ENCODE measurements at regions of chr10 and their contacts with region 1.

Region 1: GRCh38 chr10:100878291-100878910 is 34.4 kb upstream of the SLF2 start:
- DNase-seq: peak; percentile 78
- H3K4me3 Mint-ChIP-seq: no peak overlapping the region
- H3K27ac Mint-ChIP-seq: no peak overlapping the region
- H3K4me1 Mint-ChIP-seq: peaks cover 7% of the 10 kb centered on the region
- H3K27me3 Mint-ChIP-seq: no peaks in the 10 kb centered on the region
- CTCF ChIP-seq: peak; percentile 73

Region 2: GRCh38 chr10:100438674-100439315 is 439.6 kb before region 1 on chr10:
- CTCF ChIA-PET with region 1: interaction called, 40 read pairs
- POLR2A ChIA-PET with region 1: no interaction called
- intact Hi-C with region 1: loop called (anchors 1 kb)
- DNase-seq: no peak
- H3K4me3 Mint-ChIP-seq: no peak overlapping the region
- H3K27ac Mint-ChIP-seq: no peak overlapping the region
- H3K4me1 Mint-ChIP-seq: peaks cover 4% of the 10 kb centered on the region
- H3K27me3 Mint-ChIP-seq: no peaks in the 10 kb centered on the region
- CTCF ChIP-seq: no peak

Region 3: GRCh38 chr10:100535715-100536353 is 342.6 kb before region 1 on chr10 and contains the start of gene HIF1AN:
- CTCF ChIA-PET with region 1: interaction called, 19 read pairs
- POLR2A ChIA-PET with region 1: interaction called, 8 read pairs
- intact Hi-C with region 1: loop called (anchors 10 kb)
- DNase-seq: peak; percentile 94
- H3K4me3 Mint-ChIP-seq: no peak within 1 kb of the TSS
- H3K27ac Mint-ChIP-seq: no peak within 1 kb of the TSS
- H3K4me1 Mint-ChIP-seq: peaks cover 7% of the 10 kb centered on the region
- H3K27me3 Mint-ChIP-seq: no peaks in the 10 kb centered on the region
- CTCF ChIP-seq: peak; percentile 87
- total RNA-seq, gene HIF1AN: 40.1 and 41.0 TPM in 2 replicates

Region 4: DNA sequence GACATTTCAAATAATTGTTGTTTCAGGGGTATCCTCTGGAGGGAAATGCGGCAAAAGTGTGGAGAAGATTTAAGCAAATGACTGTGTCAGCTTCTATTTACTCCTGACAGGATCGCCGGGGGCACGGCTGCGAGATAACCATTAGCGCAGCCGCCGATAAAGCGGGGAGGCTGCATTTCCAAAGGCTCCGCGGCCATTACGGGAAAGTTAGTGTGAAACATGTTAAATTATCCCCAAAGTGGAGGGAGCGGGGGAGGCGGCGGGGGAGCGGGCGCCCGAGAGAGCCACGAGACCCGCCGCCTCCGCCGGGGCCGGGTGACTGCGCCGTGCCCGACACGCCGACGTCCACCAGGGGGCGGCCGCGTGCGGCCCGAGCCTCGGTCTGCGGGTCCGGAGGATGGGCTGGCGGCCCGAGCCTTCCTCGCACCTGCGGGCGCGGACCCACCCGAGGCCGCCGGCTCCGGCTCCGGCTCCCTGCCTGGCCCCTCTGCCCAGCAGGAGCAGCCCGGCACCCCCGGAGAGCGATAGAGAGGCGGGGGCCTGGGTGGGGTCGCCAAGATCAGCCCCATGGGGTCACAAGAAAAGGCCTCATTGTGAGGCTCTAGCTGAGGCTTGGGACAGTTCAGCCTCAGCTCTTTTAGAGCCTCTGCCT is 207.4 kb before region 1 on chr10:
- CTCF ChIA-PET with region 1: interaction called, 6 read pairs
- POLR2A ChIA-PET with region 1: no interaction called
- intact Hi-C with region 1: loop called (anchors 1 kb)
- DNase-seq: peak; percentile 16
- H3K4me3 Mint-ChIP-seq: no peak overlapping the region
- H3K27ac Mint-ChIP-seq: no peak overlapping the region
- H3K4me1 Mint-ChIP-seq: no peaks in the 10 kb centered on the region
- H3K27me3 Mint-ChIP-seq: peaks cover 62% of the 10 kb centered on the region
- CTCF ChIP-seq: peak; percentile 80

Region 5: DNA sequence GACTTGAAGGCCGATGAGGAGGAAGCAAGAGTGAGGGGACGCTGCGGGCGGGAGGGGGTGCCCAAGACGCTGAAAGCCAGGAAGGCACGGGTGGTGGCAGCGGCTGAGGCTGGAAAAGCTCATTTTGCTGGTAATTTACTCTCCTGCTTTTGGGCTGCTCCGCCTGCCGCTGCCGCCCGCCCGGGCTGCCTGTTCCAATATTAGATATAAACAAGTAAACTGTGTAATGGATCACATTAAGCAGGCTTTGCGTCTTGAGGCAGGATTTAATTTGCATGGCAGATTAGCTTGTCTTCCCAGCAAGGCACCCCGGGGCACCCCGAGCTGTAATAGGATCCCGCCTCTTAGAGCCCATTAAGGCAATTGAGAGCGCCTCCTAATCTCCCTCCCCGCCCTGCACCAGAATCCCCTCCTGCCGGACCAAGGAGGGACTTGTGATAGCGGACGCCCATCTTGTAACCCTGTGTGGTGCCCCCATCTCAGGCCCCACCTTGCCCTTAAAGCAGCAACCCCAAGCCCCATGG is 11.8 kb before region 1 on chr10:
- CTCF ChIA-PET with region 1: interaction called, 10 read pairs
- POLR2A ChIA-PET with region 1: no interaction called
- intact Hi-C with region 1: no loop called
- DNase-seq: no peak
- H3K4me3 Mint-ChIP-seq: no peak overlapping the region
- H3K27ac Mint-ChIP-seq: no peak overlapping the region
- H3K4me1 Mint-ChIP-seq: no peaks in the 10 kb centered on the region
- H3K27me3 Mint-ChIP-seq: peaks cover 39% of the 10 kb centered on the region
- CTCF ChIP-seq: no peak

Region 6: DNA sequence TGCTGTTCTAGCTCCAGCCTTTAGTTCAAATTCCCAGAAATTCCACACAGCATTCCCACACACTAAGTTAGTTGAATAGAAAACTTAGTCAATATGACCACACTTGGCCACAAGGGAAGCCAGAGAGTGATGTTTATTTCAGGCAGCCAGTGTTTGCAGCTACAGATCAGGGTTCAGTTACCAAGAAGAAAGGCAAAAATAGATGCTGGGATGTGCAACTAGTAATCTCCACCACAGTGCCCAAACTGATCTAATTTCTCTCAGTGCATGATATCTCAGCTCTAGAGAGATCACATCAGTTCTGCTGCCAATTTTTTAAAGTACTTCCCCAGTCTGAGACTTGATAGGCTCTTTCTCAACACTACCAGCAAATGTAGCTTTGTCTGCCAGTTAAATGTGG is 52.0 kb after region 1 on chr10:
- CTCF ChIA-PET with region 1: no interaction called
- POLR2A ChIA-PET with region 1: no interaction called
- intact Hi-C with region 1: no loop called
- DNase-seq: no peak
- H3K4me3 Mint-ChIP-seq: no peak overlapping the region
- H3K27ac Mint-ChIP-seq: no peak overlapping the region
- H3K4me1 Mint-ChIP-seq: no peaks in the 10 kb centered on the region
- H3K27me3 Mint-ChIP-seq: no peaks in the 10 kb centered on the region
- CTCF ChIP-seq: no peak

Region 7: DNA sequence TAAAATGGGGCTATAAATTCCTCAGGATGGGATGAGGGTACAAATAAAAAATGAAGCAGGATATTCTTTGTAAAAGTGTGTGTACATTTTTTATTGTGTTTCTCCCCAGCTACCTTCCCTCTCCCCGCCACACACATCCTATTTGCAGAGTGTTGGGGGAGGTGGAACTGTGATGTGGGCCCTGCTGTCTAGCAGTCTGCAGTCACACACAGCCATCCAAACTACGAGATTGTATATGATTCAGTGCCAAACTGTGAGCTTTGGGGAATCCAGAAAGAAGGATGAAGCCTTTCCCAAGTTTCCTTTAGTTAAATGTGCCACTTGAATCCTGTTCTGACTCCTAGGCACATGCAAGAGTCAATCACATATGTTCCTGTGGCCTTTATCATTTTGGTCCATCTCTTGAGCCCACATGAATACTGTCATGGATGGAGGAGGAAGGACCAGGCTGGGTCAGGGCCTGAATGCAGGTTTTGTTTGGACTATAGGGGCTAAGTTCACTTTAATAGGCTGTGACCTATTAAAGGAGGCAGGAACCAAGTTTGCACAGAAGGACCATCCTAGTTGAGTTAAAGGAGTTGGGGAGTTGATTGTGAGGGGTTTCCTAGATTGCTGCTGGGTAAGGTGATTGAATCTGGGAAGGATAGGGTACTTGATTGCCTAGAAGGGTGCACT is 89.8 kb after region 1 on chr10:
- CTCF ChIA-PET with region 1: no interaction called
- POLR2A ChIA-PET with region 1: no interaction called
- intact Hi-C with region 1: no loop called
- DNase-seq: no peak
- H3K4me3 Mint-ChIP-seq: peak overlapping the region; percentile 66
- H3K27ac Mint-ChIP-seq: no peak overlapping the region
- H3K4me1 Mint-ChIP-seq: no peaks in the 10 kb centered on the region
- H3K27me3 Mint-ChIP-seq: no peaks in the 10 kb centered on the region
- CTCF ChIP-seq: no peak

Measured in MCF 10A (cell line).